ENCODE measurements at regions of chr4 and their contacts with region 1.

Region 1: DNA sequence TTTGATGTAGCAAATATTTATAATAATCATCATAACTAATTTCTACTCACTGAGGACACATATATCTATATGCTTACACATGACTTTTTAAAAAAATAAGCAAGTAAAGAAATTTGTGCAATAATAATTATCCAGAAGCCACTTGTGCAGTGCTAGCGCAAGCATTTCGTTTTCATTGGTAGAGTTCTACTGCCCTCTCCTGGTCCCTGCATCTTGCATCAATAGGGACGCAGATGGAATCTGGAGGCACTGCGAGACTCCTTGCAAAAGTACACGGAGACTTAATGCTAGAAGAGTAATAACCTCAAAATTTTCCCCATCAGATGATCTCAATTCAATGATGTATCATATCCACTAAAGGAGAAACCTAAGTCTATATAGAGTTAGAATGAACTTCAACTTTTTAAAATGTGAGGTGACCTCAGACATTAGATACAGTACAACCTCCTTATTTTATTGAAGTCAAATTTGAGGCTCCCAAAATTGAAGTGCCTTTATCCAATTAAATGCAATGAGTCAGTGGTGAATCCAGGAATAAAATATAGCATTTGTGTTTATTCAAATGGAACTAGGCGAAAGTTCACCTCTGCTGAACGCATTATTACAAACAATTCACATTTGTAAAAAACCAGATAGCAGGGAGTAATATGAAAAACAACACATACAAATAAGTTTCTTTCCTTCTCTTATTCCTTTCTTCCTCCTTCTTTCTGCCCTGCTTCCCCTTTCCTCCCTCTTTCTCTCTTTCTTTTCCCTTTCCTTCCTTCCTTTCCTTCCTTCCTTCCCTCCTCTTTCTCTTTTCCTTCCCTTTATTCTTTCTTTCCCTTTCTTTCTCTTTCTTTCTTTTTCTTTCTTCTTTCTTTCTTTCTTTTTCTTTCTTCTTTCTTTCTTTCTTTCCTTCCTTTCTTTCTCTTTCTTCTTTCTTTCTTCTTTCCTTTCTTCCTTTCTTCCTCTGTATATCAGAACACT is 450.0 kb downstream of the ANKRD50 start:
- DNase-seq: peak in 1 of 2 donors; percentile 25
- ATAC-seq: peak; percentile 64 to 91 (median 88)
- H3K4me3 ChIP-seq: no peak overlapping the region
- H3K27ac ChIP-seq: no peak overlapping the region
- H3K4me1 ChIP-seq: no peaks in the 10 kb centered on the region
- H3K27me3 ChIP-seq: no peaks in the 10 kb centered on the region
- CTCF ChIP-seq: peak; percentile 87

Region 2: DNA sequence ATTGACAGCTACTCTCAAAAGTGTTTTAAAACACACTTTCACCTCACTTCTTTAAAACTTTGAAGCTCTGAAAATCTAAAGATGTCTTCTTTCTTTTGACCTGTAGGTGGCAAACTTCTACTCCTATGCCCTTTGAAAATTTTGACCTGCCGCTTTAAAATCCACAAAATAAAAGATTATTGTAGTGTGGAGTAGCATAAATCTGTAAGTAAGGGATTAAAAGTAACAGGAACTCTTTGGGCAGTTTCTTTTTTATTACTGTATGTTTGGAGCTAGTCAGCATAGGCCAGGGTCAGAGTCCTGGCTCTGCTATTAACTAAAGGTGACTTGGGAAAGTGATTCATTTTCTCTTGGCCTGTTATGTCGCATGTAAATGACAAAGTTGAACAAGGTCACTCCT is 1504.5 kb before region 1 on chr4:
- intact Hi-C with region 1: loop called in 1 of 2 experiments (anchors 10 kb)
- DNase-seq: no peak
- ATAC-seq: peak in 2 of 4 donors; percentile 40 to 74
- H3K4me3 ChIP-seq: no peak overlapping the region
- H3K27ac ChIP-seq: no peak overlapping the region
- H3K4me1 ChIP-seq: no peaks in the 10 kb centered on the region
- H3K27me3 ChIP-seq: no peaks in the 10 kb centered on the region
- CTCF ChIP-seq: peak; percentile 79

Region 3: GRCh38 chr4:123102897-123103471 is 1159.5 kb before region 1 on chr4:
- intact Hi-C with region 1: loop called (anchors 5 to 10 kb)
- DNase-seq: no peak
- ATAC-seq: peak; percentile 58 to 88 (median 68)
- H3K4me3 ChIP-seq: no peak overlapping the region
- H3K27ac ChIP-seq: no peak overlapping the region
- H3K4me1 ChIP-seq: no peaks in the 10 kb centered on the region
- H3K27me3 ChIP-seq: no peaks in the 10 kb centered on the region
- CTCF ChIP-seq: peak; percentile 82

Measured in psoas muscle (tissue), 8 donors.